ENCODE measurements at regions of chr7 and their contacts with region 1.

Region 1: GRCh38 chr7:120987683-120988590 is 574 bp upstream of the CPED1 start:
- DNase-seq: peak; percentile 94 to 100 (median 94)
- ATAC-seq: peak; percentile 73
- H3K4me3 ChIP-seq: peak overlapping the region; percentile 63
- H3K27ac ChIP-seq: peak overlapping the region; percentile 78
- H3K4me1 ChIP-seq: peaks cover 9 to 32% of the 10 kb centered on the region in 2 experiments
- H3K27me3 ChIP-seq: no peaks in the 10 kb centered on the region
- CTCF ChIP-seq: peak; percentile 97 to 100 (median 99)
- EP300 ChIP-seq: no peak; the same call in 1 of the 2 replicates
- POLR2A ChIP-seq: peak; percentile 50; the same call in 1 of the 2 replicates
- RAD21 ChIP-seq: peak; percentile 98 to 99

Region 2: DNA sequence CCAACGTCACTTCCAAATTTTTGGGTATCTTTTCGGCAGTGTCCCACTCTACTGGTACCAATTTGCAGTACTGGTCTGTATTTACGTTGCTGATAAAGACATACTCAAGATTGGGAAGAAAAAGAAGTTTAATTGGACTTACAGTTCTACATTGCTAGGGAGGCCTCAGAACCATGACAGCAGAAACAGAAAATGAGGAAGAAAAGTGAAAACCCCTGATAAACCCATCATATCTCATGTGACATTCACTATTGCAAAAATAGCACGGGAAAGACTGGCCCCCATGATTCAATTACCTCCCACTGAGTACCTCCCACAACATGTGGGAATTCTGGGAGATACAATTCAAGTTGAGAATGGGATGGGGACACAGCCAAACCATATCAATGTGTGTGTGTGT is 1079.0 kb before region 1 on chr7:
- CTCF ChIA-PET with region 1: no interaction called
- POLR2A ChIA-PET with region 1: no interaction called
- in situ Hi-C with region 1: no loop called
- intact Hi-C with region 1: loop called (anchors 5 kb)
- DNase-seq: peak in 1 of 4 experiments; percentile 42
- ATAC-seq: no peak
- H3K4me3 ChIP-seq: no peak overlapping the region
- H3K27ac ChIP-seq: no peak overlapping the region
- H3K4me1 ChIP-seq: peaks cover 0 to 6% of the 10 kb centered on the region in 2 experiments; a peak in 2 of 5 replicates
- H3K27me3 ChIP-seq: no peaks in the 10 kb centered on the region
- CTCF ChIP-seq: no peak
- EP300 ChIP-seq: no peak
- POLR2A ChIP-seq: no peak
- RAD21 ChIP-seq: no peak

Region 3: DNA sequence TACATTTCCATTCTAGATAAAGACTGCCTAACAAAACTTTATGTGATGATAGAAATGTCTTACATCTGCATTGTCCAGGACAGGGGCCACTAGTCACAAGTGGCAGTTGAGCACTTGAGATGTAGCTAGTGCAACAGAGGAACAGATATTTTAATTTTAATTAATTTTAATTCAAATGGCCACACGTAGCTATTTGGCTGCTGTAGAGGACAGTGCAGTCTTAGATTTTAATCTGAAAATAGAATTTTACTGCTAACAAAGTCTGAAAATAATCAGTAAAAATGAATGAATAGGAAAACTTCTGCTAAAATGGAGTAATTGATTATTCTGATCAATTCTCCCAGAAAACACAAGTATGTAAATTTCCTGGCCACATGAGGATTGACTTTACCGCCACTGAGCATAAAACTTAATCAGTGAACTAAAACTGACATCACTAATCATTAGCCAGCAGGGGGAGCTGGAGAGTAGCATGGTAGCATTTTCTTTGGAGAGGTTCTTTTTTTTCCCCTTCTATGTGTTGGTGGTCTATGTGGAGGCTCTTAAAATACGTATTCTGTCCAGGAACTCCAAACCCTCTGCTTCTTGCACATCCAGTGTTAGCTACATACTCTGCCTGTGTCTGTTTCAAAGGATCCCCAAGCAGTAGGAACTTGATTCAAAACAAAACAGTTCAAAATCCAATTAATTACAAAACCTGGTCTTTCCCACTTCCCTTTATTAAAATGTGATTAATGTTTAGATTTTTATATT is 182.1 kb before region 1 on chr7:
- CTCF ChIA-PET with region 1: interaction called, 3 read pairs
- POLR2A ChIA-PET with region 1: no interaction called
- in situ Hi-C with region 1: no loop called
- intact Hi-C with region 1: loop called (anchors 5 kb)
- DNase-seq: peak; percentile 73 to 86 (median 78)
- ATAC-seq: peak; percentile 89
- H3K4me3 ChIP-seq: no peak overlapping the region
- H3K27ac ChIP-seq: no peak overlapping the region
- H3K4me1 ChIP-seq: no peaks in the 10 kb centered on the region
- H3K27me3 ChIP-seq: no peaks in the 10 kb centered on the region
- CTCF ChIP-seq: peak; percentile 87 to 95 (median 91)
- EP300 ChIP-seq: no peak
- POLR2A ChIP-seq: no peak
- RAD21 ChIP-seq: peak; percentile 83 to 89

Region 4: GRCh38 chr7:121041516-121042148 is 53.7 kb after region 1 on chr7:
- CTCF ChIA-PET with region 1: interaction called, 3 read pairs
- POLR2A ChIA-PET with region 1: interaction called, 9 read pairs
- in situ Hi-C with region 1: no loop called
- intact Hi-C with region 1: loop called (anchors 1 kb)
- DNase-seq: peak in 2 of 4 experiments; percentile 73 to 92
- ATAC-seq: 0 out of 3 replicates have a peak, but pooled peaks have one; percentile 1
- H3K4me3 ChIP-seq: no peak overlapping the region
- H3K27ac ChIP-seq: peak overlapping the region; percentile 88
- H3K4me1 ChIP-seq: peaks cover 10 to 65% of the 10 kb centered on the region in 2 experiments
- H3K27me3 ChIP-seq: no peaks in the 10 kb centered on the region
- CTCF ChIP-seq: no peak
- EP300 ChIP-seq: peak; percentile 97
- POLR2A ChIP-seq: no peak
- RAD21 ChIP-seq: 0 out of 4 replicates have a peak, but pooled peaks of 1 of the 2 experiments have one; percentile 14

Region 5: DNA sequence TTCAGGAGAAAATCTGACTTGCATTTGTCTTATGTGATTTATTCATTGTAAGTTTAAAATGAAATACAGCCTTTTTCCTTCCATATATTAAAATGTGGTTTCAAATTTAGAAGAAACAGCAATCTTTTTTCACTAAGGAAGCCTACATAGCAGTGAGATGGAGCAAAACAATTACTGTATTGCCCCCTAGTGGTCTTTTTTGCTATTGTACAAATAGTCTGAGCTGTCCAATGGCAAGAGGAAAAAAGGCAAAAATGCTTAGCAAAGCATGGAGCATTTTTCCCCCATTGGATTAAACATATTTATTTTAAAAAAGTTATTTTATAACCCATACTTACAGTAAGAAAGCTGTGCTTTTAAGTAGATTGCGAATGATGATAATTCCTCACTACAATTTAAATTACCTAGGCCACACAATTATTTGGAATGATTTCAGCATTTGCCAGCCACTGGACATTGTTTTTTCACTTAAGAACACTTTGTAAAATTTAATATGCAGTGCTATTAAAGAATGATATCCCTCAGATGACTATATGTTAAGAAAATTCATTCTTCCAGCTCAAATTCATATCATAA is 120.1 kb after region 1 on chr7:
- CTCF ChIA-PET with region 1: interaction called, 16 read pairs
- POLR2A ChIA-PET with region 1: interaction called, 4 read pairs
- in situ Hi-C with region 1: no loop called
- intact Hi-C with region 1: loop called (anchors 1 kb)
- DNase-seq: peak; percentile 67 to 82 (median 79)
- ATAC-seq: peak; percentile 99
- H3K4me3 ChIP-seq: no peak overlapping the region
- H3K27ac ChIP-seq: no peak overlapping the region
- H3K4me1 ChIP-seq: no peaks in the 10 kb centered on the region
- H3K27me3 ChIP-seq: no peaks in the 10 kb centered on the region
- CTCF ChIP-seq: peak; percentile 61 to 95 (median 83)
- EP300 ChIP-seq: no peak
- POLR2A ChIP-seq: no peak
- RAD21 ChIP-seq: peak; percentile 78 to 89

Region 6: DNA sequence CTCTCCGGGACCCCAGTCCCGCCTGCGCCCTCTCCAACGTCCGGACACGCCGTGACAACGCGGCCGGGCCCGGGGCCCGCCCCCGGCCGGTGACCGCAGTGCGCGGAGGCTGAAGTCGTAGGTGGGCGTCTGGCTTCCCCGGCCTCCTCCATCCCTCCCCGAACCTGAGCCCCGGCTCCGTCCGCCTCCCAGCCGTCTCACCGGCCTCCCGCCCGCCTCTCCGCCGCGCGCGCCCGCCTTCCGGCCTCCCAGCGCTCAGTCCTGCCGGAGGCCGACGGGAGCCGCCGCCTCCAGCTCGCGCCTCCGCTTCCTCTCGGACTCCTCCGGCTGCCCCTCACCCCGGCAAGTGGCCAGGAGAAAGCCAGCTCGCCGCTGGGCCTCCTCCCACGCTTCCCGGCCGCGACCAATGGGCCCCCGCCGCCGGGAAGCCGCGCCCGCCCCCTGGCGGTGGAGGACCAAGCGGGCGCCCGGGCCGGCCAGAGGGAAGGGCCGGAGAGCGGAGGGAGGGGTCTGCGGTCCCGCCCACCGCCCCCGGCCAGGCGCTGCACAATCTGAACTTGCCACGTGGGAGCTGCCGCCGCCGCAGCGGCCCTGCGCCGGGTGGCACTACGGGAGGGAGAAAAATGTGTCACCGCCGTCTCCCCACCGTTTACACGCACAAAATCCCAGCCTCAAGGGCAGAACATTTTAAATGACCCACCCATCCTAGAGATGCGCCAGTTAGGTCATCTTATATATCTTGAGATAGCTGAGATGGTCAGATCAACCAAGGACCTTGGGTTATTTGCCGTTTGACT is 408.2 kb after region 1 on chr7 and contains the start of gene FAM3C:
- CTCF ChIA-PET with region 1: no interaction called
- POLR2A ChIA-PET with region 1: no interaction called
- in situ Hi-C with region 1: no loop called
- intact Hi-C with region 1: loop called (anchors 10 kb)
- DNase-seq: peak; percentile 98 to 99 (median 99)
- ATAC-seq: peak; percentile 97
- H3K4me3 ChIP-seq: peak within 1 kb of the TSS; percentile 89
- H3K27ac ChIP-seq: peak within 1 kb of the TSS; percentile 79
- H3K4me1 ChIP-seq: peaks cover 5 to 10% of the 10 kb centered on the region in 2 experiments; a peak in 3 of 5 replicates
- H3K27me3 ChIP-seq: no peaks in the 10 kb centered on the region
- CTCF ChIP-seq: peak; percentile 92 to 95 (median 93)
- EP300 ChIP-seq: peak; percentile 32
- POLR2A ChIP-seq: peak; percentile 97
- RAD21 ChIP-seq: peak; percentile 54 to 69
- polyA plus RNA-seq, gene FAM3C: 10.6 to 13.1 TPM

Measured in K562 (cell line).